Activated CD4-positive, alpha-beta T cell treated with anti-CD3 and anti-CD28 coated beads for 36 hours (primary cell): ENCODE measurements at regions of chr4 and their contacts with region 1.

Region 1: GRCh38 chr4:140523857-140524742 is at the start of gene ELMOD2:
- DNase-seq: peak; percentile 99
- ATAC-seq: peak; percentile 100
- H3K4me3 Mint-ChIP-seq: peak within 1 kb of the TSS; percentile 82
- H3K27ac Mint-ChIP-seq: peak within 1 kb of the TSS; percentile 32
- H3K4me1 Mint-ChIP-seq: peaks cover 19% of the 10 kb centered on the region
- H3K27me3 Mint-ChIP-seq: no peaks in the 10 kb centered on the region
- total RNA-seq, gene ELMOD2: 13.2 to 14.3 TPM

Region 2: GRCh38 chr4:139177868-139178611 is 1346.1 kb before region 1 on chr4:
- CTCF ChIA-PET with region 1: no interaction called
- POLR2A ChIA-PET with region 1: no interaction called
- intact Hi-C with region 1: loop called in 1 of 2 experiments (anchors 5 kb)
- DNase-seq: peak; percentile 95
- ATAC-seq: peak; percentile 77
- H3K4me3 Mint-ChIP-seq: peak overlapping the region; percentile 81
- H3K27ac Mint-ChIP-seq: peak overlapping the region; percentile 72
- H3K4me1 Mint-ChIP-seq: peaks cover 12% of the 10 kb centered on the region
- H3K27me3 Mint-ChIP-seq: peaks cover 12% of the 10 kb centered on the region

Region 3: DNA sequence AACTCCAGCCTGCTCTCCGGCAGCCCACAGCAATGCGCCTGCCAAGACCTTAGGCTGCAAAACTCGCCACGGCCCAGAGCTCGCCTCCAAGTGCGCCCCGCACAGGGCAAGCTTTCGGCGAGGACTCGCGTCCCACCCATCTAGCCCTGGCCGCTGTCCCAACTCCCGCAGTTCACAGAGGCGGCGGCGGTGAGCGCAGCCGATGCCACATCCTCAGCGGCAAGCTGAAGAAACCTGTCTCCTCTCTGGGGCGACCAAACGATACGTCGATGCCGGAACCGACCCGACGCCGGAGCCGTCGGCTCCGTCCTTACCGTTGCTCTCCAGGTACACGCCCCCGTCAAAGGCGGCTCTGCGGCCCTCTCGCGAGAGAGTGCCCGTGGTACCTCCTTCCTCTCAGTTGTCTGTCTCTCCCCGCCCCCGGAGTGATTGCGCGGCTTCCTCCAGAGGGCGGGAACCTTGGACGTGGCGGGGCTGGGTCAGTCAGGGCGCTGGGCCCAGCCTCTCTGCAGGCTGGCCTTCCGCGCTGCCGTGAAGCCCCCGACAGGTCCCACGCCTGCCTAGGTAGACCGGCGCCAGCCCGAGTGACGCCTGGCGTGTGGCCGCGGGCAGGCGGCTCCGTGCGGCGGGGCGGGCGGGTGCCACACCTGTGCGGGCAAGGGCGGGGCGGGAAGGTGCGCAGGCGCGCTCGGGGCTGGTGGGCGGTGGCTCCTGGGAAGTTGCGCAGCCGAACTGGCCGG is 1070.6 kb before region 1 on chr4:
- CTCF ChIA-PET with region 1: no interaction called
- POLR2A ChIA-PET with region 1: no interaction called
- intact Hi-C with region 1: loop called in 1 of 2 experiments (anchors 2 kb)
- DNase-seq: peak; percentile 99
- ATAC-seq: peak; percentile 90
- H3K4me3 Mint-ChIP-seq: peak overlapping the region; percentile 91
- H3K27ac Mint-ChIP-seq: peak overlapping the region; percentile 98
- H3K4me1 Mint-ChIP-seq: peaks cover 48% of the 10 kb centered on the region
- H3K27me3 Mint-ChIP-seq: no peaks in the 10 kb centered on the region

Region 4: DNA sequence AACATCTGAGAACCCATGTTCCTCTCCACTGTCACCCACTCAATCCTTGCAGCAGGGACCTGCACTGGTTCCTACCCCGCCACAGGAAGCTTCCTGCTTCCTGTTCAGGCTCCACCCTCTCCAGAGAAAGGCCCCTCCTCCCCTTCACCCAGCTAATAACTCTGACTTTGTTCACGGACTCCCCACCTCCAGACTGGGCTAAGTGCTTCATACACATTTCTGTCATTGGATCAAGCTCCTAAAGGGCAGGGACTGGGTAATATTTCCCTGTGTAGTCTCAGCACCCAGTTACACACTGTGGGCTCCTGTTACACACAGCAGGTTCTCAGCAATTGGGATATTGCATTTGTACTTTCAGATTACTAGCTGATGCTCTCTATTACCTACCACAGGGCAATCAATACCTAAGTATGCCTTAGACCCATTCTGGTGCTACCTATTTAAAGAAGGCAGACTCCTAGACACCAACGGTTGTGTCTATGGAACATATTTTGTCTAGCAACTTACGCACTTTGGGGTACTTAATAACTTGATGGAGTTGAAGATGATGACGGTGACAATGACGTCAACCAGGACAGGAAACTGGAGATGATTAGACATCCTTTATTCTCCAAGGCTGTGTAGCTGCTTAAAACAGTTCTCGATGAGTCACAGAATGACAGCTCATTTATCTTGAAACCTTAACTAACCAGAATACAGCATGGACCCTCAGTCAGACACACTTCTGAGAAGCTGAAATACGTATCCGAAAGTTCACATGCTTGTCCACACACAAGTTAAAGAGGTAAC is 428.2 kb before region 1 on chr4:
- CTCF ChIA-PET with region 1: no interaction called
- POLR2A ChIA-PET with region 1: no interaction called
- intact Hi-C with region 1: loop called in 1 of 2 experiments (anchors 1 kb)
- DNase-seq: peak; percentile 81
- ATAC-seq: peak; percentile 83
- H3K4me3 Mint-ChIP-seq: peak overlapping the region; percentile 75
- H3K27ac Mint-ChIP-seq: peak overlapping the region; percentile 99
- H3K4me1 Mint-ChIP-seq: peaks cover 93% of the 10 kb centered on the region
- H3K27me3 Mint-ChIP-seq: no peaks in the 10 kb centered on the region

Region 5: GRCh38 chr4:140308366-140309123 is 215.6 kb before region 1 on chr4:
- CTCF ChIA-PET with region 1: no interaction called
- POLR2A ChIA-PET with region 1: no interaction called
- intact Hi-C with region 1: no loop called
- DNase-seq: no peak
- ATAC-seq: no peak
- H3K4me3 Mint-ChIP-seq: no peak overlapping the region
- H3K27ac Mint-ChIP-seq: no peak overlapping the region
- H3K4me1 Mint-ChIP-seq: no peaks in the 10 kb centered on the region
- H3K27me3 Mint-ChIP-seq: no peaks in the 10 kb centered on the region

Region 6: DNA sequence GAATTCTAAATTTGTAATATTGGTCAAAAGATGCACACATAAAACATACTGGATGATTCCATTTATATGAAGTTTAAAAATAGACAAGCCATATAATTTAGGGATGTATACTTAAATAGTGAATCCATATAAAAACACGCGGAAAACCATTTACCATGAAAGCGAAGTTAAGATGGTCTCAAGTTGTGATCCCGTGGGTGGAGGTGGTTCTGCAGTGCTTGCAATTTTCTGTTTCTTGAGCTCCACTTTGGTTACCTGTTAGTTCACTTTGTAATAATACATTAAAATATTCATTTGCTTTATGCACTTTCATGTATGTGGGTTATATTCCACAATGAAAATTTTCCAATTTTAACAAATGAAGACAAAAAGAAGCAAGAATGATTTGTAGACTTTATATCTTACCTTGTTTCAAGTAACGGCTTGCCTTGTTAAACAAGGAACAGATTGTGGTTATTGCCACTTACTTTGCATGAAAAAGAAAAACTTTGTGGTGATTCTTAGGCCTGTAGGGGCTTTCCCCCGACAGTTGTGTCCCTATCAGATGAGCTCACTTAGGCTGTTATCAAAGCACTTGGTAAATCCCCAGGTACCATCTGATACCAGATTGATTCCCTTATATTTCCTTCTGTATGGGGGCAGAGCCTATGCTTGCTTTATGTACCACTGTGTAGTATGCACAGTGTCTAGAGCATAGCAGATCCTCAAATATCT is 32.4 kb after region 1 on chr4:
- CTCF ChIA-PET with region 1: no interaction called
- POLR2A ChIA-PET with region 1: no interaction called
- intact Hi-C with region 1: loop called (anchors 1 kb)
- DNase-seq: peak; percentile 37
- ATAC-seq: peak; percentile 99
- H3K4me3 Mint-ChIP-seq: no peak overlapping the region
- H3K27ac Mint-ChIP-seq: no peak overlapping the region
- H3K4me1 Mint-ChIP-seq: peaks cover 18% of the 10 kb centered on the region
- H3K27me3 Mint-ChIP-seq: peaks cover 18% of the 10 kb centered on the region

Region 7: GRCh38 chr4:140876615-140877364 is 352.7 kb after region 1 on chr4:
- CTCF ChIA-PET with region 1: no interaction called
- POLR2A ChIA-PET with region 1: no interaction called
- intact Hi-C with region 1: no loop called
- DNase-seq: no peak
- ATAC-seq: no peak
- H3K4me3 Mint-ChIP-seq: no peak overlapping the region
- H3K27ac Mint-ChIP-seq: no peak overlapping the region
- H3K4me1 Mint-ChIP-seq: no peaks in the 10 kb centered on the region
- H3K27me3 Mint-ChIP-seq: no peaks in the 10 kb centered on the region

Region 8: GRCh38 chr4:141121768-141122454 is 597.8 kb after region 1 on chr4:
- CTCF ChIA-PET with region 1: no interaction called
- POLR2A ChIA-PET with region 1: no interaction called
- intact Hi-C with region 1: no loop called
- DNase-seq: peak; percentile 66
- ATAC-seq: peak; percentile 99
- H3K4me3 Mint-ChIP-seq: no peak overlapping the region
- H3K27ac Mint-ChIP-seq: no peak overlapping the region
- H3K4me1 Mint-ChIP-seq: peaks cover 14% of the 10 kb centered on the region
- H3K27me3 Mint-ChIP-seq: peaks cover 33% of the 10 kb centered on the region

Region 9: GRCh38 chr4:141220655-141221605 is 696.8 kb after region 1 on chr4 and contains the start of gene ZNF330:
- CTCF ChIA-PET with region 1: no interaction called
- POLR2A ChIA-PET with region 1: no interaction called
- intact Hi-C with region 1: loop called in 1 of 2 experiments (anchors 2 kb)
- DNase-seq: peak; percentile 93
- ATAC-seq: peak; percentile 85
- H3K4me3 Mint-ChIP-seq: peak within 1 kb of the TSS; percentile 92
- H3K27ac Mint-ChIP-seq: peak within 1 kb of the TSS; percentile 97
- H3K4me1 Mint-ChIP-seq: peaks cover 41% of the 10 kb centered on the region
- H3K27me3 Mint-ChIP-seq: no peaks in the 10 kb centered on the region
- total RNA-seq, gene ZNF330: 40.5 to 65.7 TPM